Activated CD4-positive, alpha-beta memory T cell treated with anti-CD3 and anti-CD28 coated beads for 36 hours (primary cell): ENCODE measurements at regions of chr13 and their contacts with region 1.

Region 1: DNA sequence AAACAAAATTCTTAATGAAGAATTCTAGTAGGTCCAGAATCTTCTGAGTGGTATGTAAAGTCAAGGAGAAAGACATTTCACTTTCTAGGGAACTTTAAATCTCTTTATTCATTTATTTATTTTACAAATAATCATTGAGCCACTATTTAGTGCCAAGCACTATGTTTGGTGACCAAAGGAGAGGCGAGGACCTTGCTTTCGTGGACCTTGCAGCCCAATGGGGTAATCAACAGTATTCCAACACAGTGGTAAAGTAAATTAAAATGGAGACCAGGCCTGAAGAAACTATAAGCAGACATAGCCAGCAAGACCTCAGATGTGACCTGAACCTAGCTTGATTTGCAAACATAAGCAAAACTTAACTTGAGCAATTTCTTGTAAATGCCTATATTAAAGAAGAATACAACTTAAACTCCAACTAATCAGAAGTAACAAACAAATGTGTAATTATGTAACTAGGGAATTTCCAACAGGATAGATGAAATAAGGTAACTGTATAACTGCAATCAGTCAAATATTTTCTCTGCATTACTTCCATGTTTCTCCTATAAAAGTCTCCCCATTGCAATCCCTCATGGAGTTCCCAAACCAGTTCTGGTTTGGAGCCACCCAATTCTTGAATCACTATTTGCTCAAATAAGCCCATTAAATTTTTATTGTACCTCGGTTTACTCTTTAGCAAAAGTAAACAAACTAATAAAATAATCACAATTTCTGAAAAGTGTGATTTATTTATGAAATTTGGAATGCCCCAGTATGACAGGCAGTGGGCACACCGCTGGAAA is 67.6 kb downstream of the MBNL2 start:
- DNase-seq: no peak
- H3K4me3 Mint-ChIP-seq: no peak overlapping the region
- H3K27ac Mint-ChIP-seq: peak overlapping the region; percentile 72
- H3K4me1 Mint-ChIP-seq: peaks cover 54% of the 10 kb centered on the region
- H3K27me3 Mint-ChIP-seq: no peaks in the 10 kb centered on the region

Region 2: DNA sequence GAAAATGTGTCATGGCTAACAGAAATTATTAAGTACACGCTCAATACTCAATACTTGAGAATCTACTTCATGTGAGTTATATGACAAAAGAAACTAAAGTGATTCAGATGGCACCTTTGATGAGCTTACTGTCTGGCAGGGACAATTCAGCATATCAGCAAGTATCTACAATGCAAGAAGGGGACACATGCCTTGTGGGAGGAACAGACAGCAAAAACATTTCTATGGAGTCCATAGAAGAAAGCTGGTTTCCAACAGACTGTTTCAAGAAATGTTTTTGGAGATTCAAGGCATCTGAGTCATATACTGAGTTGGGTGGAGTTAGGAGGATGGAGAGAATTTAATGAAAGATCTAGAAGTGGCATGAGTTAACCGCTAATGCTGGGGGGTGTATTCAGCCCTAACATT is 12.8 kb before region 1 on chr13:
- CTCF ChIA-PET with region 1: no interaction called
- POLR2A ChIA-PET with region 1: interaction called, 5 read pairs
- intact Hi-C with region 1: loop called (anchors 2 kb)
- DNase-seq: no peak
- H3K4me3 Mint-ChIP-seq: no peak overlapping the region
- H3K27ac Mint-ChIP-seq: peak overlapping the region; percentile 2
- H3K4me1 Mint-ChIP-seq: peaks cover 52% of the 10 kb centered on the region
- H3K27me3 Mint-ChIP-seq: no peaks in the 10 kb centered on the region

Region 3: GRCh38 chr13:97478247-97478646 is 188.5 kb after region 1 on chr13:
- CTCF ChIA-PET with region 1: no interaction called
- POLR2A ChIA-PET with region 1: no interaction called
- intact Hi-C with region 1: no loop called
- DNase-seq: no peak
- H3K4me3 Mint-ChIP-seq: no peak overlapping the region
- H3K27ac Mint-ChIP-seq: no peak overlapping the region
- H3K4me1 Mint-ChIP-seq: no peaks in the 10 kb centered on the region
- H3K27me3 Mint-ChIP-seq: peaks cover 3% of the 10 kb centered on the region